Common myeloid progenitor, CD34-positive (primary cell): ENCODE measurements at regions of chr7 and their contacts with region 1.

Region 1: DNA sequence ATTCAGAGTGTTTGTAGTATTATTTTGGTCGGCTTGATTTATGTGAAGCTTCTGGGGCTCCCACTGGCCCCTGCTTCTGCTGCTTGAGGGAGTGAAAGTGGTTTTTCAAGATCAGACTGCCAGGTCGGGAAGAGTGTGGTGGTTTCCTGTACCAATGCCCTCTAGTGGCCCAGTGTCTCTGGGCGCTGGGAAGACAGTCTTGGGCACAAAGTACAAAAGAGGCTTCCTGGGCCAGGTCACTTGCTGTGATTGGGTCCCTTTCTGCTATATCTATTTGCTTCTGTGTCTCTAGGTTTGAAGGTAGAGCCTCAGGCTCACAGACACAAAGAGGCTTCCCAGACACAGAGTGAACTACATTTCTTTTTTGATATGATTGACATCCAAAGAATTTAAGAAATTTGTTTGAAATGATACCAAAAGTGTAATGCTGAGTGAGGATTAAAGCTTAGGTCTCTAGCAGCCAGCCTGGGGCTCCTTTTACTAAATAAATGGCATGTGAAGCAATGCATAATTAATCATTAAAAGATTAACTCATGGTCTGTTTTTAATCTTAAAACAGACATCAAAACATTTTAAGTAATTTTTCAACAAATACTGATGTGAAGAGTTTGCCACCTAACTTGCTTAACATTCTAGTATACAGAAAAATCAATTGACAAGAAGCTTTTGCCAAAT is 36.3 kb downstream of the ABCB1 start:
- DNase-seq: peak; percentile 61 to 75 (median 71)
- H3K4me3 ChIP-seq: peak overlapping the region in 2 of 7 experiments; percentile 11 to 49
- H3K27ac ChIP-seq: peak overlapping the region in 1 of 2 experiments; percentile 46
- H3K4me1 ChIP-seq: peaks cover 0 to 5% (median 2%) of the 10 kb centered on the region in 4 experiments
- H3K27me3 ChIP-seq: no peaks in the 10 kb centered on the region

Region 2: DNA sequence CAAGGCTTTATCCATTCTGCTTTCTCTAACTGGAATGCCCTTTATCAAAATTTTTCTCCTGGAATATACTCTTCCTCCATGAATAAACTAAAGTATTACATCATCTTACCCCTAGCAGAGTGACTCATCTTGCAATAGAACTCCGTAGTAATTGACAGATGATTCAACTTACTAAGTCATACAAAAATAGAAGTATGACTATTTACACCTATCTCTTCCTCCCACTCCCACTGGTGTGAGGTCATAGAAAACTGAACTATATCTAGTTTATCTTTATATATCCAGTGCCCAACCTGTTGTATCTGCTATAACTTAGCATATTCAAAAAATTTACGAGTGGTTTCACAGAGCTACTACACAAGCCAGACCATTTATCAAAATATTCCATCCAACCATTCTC is 10.2 kb after region 1 on chr7:
- CTCF ChIA-PET with region 1: interaction called, 11 read pairs
- POLR2A ChIA-PET with region 1: interaction called, 3 read pairs
- DNase-seq: peak in 2 of 3 donors; percentile 22 to 33
- H3K4me3 ChIP-seq: no peak overlapping the region
- H3K27ac ChIP-seq: no peak overlapping the region
- H3K4me1 ChIP-seq: peaks cover 0 to 12% (median 1%) of the 10 kb centered on the region in 4 experiments
- H3K27me3 ChIP-seq: no peaks in the 10 kb centered on the region

Region 3: DNA sequence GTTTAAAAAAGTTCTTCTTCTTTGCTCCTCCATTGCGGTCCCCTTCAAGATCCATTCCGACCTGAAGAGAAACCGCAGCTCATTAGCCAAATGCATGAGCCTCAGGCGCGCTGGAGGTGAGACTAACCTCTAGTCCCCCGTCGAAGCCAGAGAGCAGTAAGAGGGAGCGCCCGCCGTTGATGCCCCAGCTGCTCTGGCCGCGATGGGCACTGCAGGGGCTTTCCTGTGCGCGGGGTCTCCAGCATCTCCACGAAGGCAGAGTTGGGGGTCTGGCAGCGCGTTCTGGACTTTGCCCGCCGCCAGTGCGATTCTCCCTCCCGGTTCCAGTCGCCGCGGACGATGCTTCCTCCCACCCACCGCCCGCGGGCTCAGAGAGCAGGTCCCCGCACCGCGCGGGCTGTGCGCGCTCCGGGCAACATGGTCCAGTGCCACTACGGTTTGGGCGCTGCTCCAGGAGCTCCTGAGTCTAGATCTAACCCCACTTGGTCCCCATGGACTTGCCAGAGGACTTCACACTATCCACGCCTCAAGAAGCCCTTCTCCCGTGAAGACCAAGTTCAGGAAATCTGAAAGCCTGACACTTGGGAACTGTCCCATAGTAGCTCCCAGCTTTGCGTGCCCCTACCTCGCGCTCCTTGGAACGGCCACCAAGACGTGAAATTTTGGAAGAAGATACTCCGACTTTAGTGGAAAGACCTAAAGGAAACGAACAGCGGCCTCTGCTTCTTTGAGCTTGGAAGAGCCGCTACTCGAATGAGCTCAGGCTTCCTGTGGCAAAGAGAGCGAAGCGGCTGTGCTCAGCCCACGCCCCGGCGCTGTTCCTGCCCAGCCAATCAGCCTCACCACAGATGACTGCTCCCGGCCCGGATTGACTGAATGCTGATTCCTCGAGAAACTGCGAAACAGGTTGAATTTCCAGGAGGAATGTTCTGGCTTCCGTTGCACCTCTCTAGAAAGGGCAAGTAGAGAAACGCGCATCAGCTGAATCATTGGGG is 36.0 kb after region 1 on chr7 and contains the start of gene ABCB1:
- CTCF ChIA-PET with region 1: interaction called, 19 read pairs
- POLR2A ChIA-PET with region 1: no interaction called
- DNase-seq: peak; percentile 57 to 79 (median 73)
- H3K4me3 ChIP-seq: peak within 1 kb of the TSS; percentile 66 to 96 (median 84)
- H3K27ac ChIP-seq: peak within 1 kb of the TSS; percentile 18 to 58
- H3K4me1 ChIP-seq: peaks cover 0 to 33% (median 16%) of the 10 kb centered on the region in 4 experiments
- H3K27me3 ChIP-seq: no peaks in the 10 kb centered on the region

Region 4: DNA sequence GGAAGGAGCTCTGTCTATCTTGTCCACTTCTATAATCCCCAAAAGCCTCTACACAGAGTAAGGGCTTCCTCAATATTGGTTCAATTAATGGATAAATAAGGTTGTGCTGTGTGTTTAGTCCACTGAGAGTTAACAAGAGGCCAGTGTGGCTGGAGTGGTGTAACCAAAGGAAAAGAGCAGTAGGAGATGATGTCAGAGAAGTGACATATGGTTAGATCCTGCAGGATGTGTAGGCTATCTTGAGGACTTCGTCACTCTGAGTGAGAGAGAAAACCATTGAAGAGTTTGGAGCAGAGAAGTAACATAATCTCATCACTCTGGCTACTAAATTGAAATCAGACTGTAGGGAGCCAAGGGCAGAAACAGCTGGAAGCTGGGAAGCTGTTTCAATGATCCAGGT is 50.8 kb after region 1 on chr7:
- CTCF ChIA-PET with region 1: no interaction called
- POLR2A ChIA-PET with region 1: no interaction called
- DNase-seq: no peak
- H3K4me3 ChIP-seq: no peak overlapping the region
- H3K27ac ChIP-seq: no peak overlapping the region
- H3K4me1 ChIP-seq: no peaks in the 10 kb centered on the region
- H3K27me3 ChIP-seq: no peaks in the 10 kb centered on the region